ENCODE measurements at regions of chr6 and their contacts with region 1.

Region 1: DNA sequence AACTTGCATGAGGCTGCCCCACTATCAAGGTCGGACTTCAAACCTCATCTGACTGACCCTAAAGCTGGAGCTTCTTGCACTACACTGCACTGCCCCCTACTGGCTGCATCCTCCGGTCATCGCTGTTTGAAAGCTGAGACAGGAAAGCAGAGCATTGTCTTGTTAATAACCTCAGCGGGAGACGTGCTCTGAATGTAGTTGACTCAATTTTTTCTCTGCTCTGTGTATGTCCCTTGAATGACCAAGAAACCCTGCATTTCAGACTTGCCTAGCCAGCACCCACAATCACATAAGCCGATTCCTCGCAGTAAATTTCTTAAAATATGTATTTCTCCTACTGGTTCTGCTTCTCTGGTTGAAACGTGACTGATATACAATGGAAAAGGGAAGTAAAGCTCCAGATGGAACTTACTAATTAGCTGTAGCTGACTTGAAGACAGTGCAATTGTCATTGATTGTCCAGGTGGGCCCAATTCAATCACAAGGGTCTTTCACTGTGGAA is 27.8 kb downstream of the TCF21 start:
- DNase-seq: peak; percentile 75
- ATAC-seq: peak; percentile 93
- H3K4me3 ChIP-seq: no peak overlapping the region
- H3K27ac ChIP-seq: no peak overlapping the region
- H3K4me1 ChIP-seq: no peaks in the 10 kb centered on the region
- H3K27me3 ChIP-seq: peaks cover 3% of the 10 kb centered on the region; the same call in 1 of the 2 replicates
- CTCF ChIP-seq: peak; percentile 94

Region 2: GRCh38 chr6:132843316-132844043 is 1073.2 kb before region 1 on chr6:
- CTCF ChIA-PET with region 1: no interaction called
- POLR2A ChIA-PET with region 1: no interaction called
- in situ Hi-C with region 1: no loop called
- intact Hi-C with region 1: loop called (anchors 10 kb)
- DNase-seq: no peak
- ATAC-seq: no peak
- H3K4me3 ChIP-seq: no peak overlapping the region
- H3K27ac ChIP-seq: no peak overlapping the region
- H3K4me1 ChIP-seq: no peaks in the 10 kb centered on the region
- H3K27me3 ChIP-seq: 0 out of 2 replicates have a peak, but pooled peaks cover 2% of the 10 kb centered on the region
- CTCF ChIP-seq: no peak

Region 3: DNA sequence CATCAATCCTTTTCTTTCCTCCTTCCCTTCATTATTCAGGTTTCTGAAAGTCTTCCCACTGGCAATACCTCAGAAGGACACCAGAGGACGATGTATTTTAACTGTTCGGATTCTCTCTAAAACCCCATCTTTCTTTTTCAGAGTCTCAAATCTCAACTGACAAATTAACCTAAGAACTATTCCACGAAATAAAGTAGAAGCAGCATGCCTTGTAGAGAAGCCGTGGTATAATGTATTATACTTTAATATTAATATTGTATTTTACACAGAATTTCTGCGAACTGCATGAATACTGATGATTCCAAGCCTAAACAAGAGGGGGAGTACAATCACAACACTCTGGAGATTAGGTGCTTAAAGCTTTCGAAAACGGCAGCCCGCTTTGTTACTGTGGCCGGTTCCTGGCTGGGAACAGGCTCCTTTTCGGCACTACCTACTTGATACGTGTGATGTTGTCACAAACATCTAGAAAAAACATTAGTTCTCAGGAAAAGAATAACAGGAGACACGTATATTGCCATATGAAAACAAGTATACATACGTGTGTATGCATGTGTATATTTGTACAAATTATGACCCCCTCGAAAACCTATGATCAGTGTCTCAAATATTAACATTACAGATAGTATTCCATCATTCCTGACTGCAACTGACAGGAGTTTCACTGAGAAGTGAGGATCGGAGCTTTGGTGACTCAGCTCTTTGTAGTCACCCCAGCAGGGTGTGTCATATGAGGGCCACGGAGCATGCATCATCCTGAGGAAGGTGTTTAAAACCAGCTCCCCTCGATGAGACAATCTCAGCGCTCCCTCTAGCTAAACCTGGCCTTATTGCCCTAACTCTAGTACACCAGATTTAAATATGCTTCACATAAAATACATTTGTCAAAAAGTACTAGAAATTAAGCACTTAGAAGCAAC is 347.5 kb before region 1 on chr6:
- CTCF ChIA-PET with region 1: interaction called, 13 read pairs
- POLR2A ChIA-PET with region 1: no interaction called
- in situ Hi-C with region 1: no loop called
- intact Hi-C with region 1: loop called (anchors 1 kb)
- DNase-seq: peak; percentile 73
- ATAC-seq: peak; percentile 91
- H3K4me3 ChIP-seq: peak overlapping the region; percentile 27 to 57
- H3K27ac ChIP-seq: no peak overlapping the region
- H3K4me1 ChIP-seq: no peaks in the 10 kb centered on the region; the same call in 1 of the 2 replicates
- H3K27me3 ChIP-seq: 0 out of 2 replicates have a peak, but pooled peaks cover 2% of the 10 kb centered on the region
- CTCF ChIP-seq: peak; percentile 90

Region 4: DNA sequence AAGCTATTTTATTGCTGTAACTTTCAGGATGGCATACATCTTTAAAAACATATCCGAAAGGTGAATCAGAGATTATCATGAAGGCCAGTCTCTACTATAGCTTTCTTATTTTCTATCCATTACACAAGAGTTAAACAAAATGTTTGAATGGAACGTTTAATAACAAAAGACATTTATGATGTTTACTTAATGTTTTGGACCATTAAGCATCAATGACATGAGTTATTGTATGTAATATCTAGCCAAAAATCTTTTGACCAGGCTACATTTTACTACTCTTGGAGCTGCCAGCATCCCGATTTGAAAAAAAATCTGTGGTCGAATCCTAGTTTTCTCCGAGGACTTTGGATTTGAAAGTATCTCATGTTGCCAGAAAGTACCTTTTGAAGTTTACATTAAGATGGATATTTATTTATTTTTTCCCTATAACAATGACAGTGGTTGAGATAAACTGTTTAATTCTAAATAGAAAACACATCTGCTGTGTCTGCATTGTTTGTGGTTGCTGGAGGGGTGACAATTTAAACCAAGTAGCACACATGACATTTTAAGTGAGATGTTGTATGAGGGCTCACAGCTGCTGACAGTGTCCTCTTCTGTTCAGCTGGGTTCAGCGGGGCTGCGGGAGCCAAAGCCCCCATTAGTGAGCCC is 321.5 kb before region 1 on chr6:
- CTCF ChIA-PET with region 1: no interaction called
- POLR2A ChIA-PET with region 1: no interaction called
- in situ Hi-C with region 1: no loop called
- intact Hi-C with region 1: no loop called
- DNase-seq: no peak
- ATAC-seq: no peak
- H3K4me3 ChIP-seq: no peak overlapping the region
- H3K27ac ChIP-seq: no peak overlapping the region
- H3K4me1 ChIP-seq: no peaks in the 10 kb centered on the region
- H3K27me3 ChIP-seq: no peaks in the 10 kb centered on the region
- CTCF ChIP-seq: no peak

Region 5: DNA sequence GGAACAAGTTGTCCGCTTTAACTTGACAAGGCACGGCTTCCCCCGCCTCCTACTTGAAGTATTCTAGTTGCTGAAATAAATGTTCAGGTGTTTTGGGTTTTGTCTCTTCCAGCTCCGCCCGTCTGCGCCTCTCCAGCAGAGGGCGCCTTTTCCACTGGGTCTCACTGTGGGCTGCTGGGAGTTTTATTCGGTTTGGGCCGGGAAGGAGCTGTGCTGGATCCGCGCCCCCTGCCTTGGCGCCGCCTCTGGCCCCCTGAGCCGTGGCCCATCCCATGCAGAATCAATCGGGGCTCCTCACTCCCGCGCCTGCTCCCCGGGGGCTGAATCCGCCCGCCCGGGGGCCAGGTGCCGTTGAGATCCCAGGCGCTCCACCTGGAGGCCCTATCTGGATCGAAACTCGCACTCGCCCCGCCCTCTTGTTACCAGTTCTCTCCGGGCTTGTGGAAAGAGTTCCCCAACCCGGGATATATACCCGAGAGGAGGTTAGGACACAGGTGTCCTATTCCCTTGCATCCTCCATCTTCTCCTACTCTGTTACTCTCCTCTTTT is 78.8 kb before region 1 on chr6:
- CTCF ChIA-PET with region 1: interaction called, 20 read pairs
- POLR2A ChIA-PET with region 1: no interaction called
- in situ Hi-C with region 1: no loop called
- intact Hi-C with region 1: loop called (anchors 1 kb)
- DNase-seq: peak; percentile 20
- ATAC-seq: peak; percentile 97
- H3K4me3 ChIP-seq: peak overlapping the region; percentile 46 to 58
- H3K27ac ChIP-seq: no peak overlapping the region
- H3K4me1 ChIP-seq: no peaks in the 10 kb centered on the region
- H3K27me3 ChIP-seq: peaks cover 2% of the 10 kb centered on the region
- CTCF ChIP-seq: peak; percentile 95

Measured in Panc1 (cell line).